ENCODE measurements at regions of chr14 and their contacts with region 1.

Region 1: DNA sequence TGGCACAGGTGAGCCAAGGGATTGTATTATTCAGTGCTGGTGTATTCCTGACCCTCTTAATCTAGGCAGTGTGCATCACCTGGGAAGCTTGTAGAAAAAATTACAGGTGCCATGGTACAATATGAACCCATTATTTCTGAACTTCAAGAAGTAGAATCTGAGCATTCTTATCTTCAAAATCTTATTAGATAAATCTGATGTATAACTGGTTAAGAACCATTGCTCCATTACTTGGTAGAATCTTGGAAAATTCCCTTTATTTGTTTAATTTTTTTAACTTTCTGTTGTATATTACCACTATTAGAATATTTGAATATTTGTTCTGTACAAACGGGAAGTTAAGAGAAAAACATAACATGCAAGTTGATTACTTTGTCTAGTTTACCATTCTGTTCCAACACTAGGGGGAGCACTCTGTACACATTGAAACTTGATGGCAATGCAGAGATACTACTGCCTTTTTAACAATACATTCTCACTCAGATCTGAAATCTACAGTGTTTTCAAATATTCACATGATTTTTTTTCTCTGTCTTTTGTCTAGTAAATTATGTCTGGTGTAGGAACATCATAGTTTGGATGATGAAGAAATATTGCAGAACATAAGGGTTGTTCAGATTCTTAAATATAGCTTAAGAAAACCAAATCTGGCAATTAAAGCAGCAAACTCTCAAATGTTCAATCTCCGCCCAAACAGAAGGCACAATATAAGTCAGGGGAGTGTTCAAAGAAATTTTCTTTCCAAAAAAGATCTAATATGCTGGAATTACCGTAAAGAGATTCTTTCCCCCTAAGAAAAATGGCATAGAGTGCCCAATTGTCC is 196.6 kb downstream of the PCNX1 start:
- DNase-seq: no peak
- H3K4me3 Mint-ChIP-seq: no peak overlapping the region
- H3K27ac Mint-ChIP-seq: no peak overlapping the region
- H3K4me1 Mint-ChIP-seq: peaks cover 3% of the 10 kb centered on the region
- H3K27me3 Mint-ChIP-seq: no peaks in the 10 kb centered on the region

Region 2: GRCh38 chr14:71115821-71116567 is 12.1 kb after region 1 on chr14:
- CTCF ChIA-PET with region 1: interaction called, 13 read pairs
- intact Hi-C with region 1: no loop called
- DNase-seq: no peak
- H3K4me3 Mint-ChIP-seq: no peak overlapping the region
- H3K27ac Mint-ChIP-seq: no peak overlapping the region
- H3K4me1 Mint-ChIP-seq: peaks cover 17% of the 10 kb centered on the region
- H3K27me3 Mint-ChIP-seq: no peaks in the 10 kb centered on the region

Measured in activated naive CD4-positive, alpha-beta T cell treated with anti-CD3 and anti-CD28 coated beads for 36 hours (primary cell).